PC-3 (cell line): ENCODE measurements at regions of chr5 and their contacts with region 1.

Region 1: GRCh38 chr5:81506900-81507588 is 113.1 kb upstream of the ACOT12 start:
- DNase-seq: peak; percentile 65
- ATAC-seq: peak; percentile 96
- H3K4me3 ChIP-seq: no peak overlapping the region
- H3K27ac ChIP-seq: no peak overlapping the region
- H3K4me1 ChIP-seq: no peaks in the 10 kb centered on the region
- H3K27me3 ChIP-seq: no peaks in the 10 kb centered on the region
- CTCF ChIP-seq: peak; percentile 78

Region 2: GRCh38 chr5:81301271-81302015 is 205.6 kb before region 1 on chr5 and contains the start of gene ZCCHC9:
- CTCF ChIA-PET with region 1: no interaction called
- POLR2A ChIA-PET with region 1: no interaction called
- intact Hi-C with region 1: loop called (anchors 5 kb)
- DNase-seq: peak; percentile 90
- ATAC-seq: peak; percentile 71
- H3K4me3 ChIP-seq: peak within 1 kb of the TSS; percentile 87
- H3K27ac ChIP-seq: peak within 1 kb of the TSS; percentile 95
- H3K4me1 ChIP-seq: peaks cover 39% of the 10 kb centered on the region
- H3K27me3 ChIP-seq: no peaks in the 10 kb centered on the region
- CTCF ChIP-seq: peak; percentile 11; the same call in 1 of the 2 replicates
- total RNA-seq, gene ZCCHC9: 19.4 and 22.7 TPM in 2 replicates

Region 3: DNA sequence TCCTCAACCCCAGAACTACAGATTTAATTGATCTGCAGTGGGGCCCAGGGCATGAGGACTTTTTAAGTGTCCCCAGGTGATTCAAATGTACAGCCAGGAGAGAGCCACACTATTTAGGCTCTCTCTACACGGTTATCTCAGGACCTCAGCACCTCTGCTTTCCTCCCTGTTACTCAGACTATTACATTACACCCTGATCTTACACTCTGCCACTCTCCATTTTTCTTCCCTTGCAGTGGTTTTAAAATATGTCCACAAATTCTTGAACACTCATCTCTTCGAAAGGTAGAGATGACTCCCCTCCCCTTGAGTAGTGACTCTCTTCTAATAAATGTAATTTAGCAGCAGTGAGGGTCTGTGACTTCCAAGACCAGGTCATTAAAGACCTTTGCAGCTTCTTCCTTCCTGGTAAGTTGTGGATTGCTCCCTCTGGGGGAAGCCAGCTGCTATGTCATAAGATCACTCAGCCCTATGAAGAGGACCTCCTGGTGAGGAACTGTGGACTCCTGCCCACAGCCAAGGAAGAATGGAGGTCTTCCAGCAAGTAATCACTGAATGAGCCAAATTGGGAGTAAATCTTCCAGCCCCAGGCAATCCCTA is 331.4 kb after region 1 on chr5:
- CTCF ChIA-PET with region 1: no interaction called
- POLR2A ChIA-PET with region 1: no interaction called
- intact Hi-C with region 1: loop called (anchors 5 kb)
- DNase-seq: peak; percentile 49
- ATAC-seq: peak; percentile 82
- H3K4me3 ChIP-seq: no peak overlapping the region
- H3K27ac ChIP-seq: no peak overlapping the region
- H3K4me1 ChIP-seq: peaks cover 11% of the 10 kb centered on the region
- H3K27me3 ChIP-seq: no peaks in the 10 kb centered on the region
- CTCF ChIP-seq: peak; percentile 68

Region 4: GRCh38 chr5:81971712-81972495 is 464.9 kb after region 1 on chr5 and contains the start of gene ATG10:
- CTCF ChIA-PET with region 1: no interaction called
- POLR2A ChIA-PET with region 1: no interaction called
- intact Hi-C with region 1: loop called (anchors 5 kb)
- DNase-seq: peak; percentile 88
- ATAC-seq: peak; percentile 96
- H3K4me3 ChIP-seq: peak within 1 kb of the TSS; percentile 78
- H3K27ac ChIP-seq: peak within 1 kb of the TSS; percentile 89
- H3K4me1 ChIP-seq: peaks cover 12% of the 10 kb centered on the region; the same call in 1 of the 2 replicates
- H3K27me3 ChIP-seq: no peaks in the 10 kb centered on the region
- CTCF ChIP-seq: no peak
- total RNA-seq, gene ATG10: 11.7 and 11.8 TPM in 2 replicates

Region 5: GRCh38 chr5:82165740-82166530 is 658.9 kb after region 1 on chr5:
- CTCF ChIA-PET with region 1: interaction called, 4 read pairs
- POLR2A ChIA-PET with region 1: no interaction called
- intact Hi-C with region 1: loop called (anchors 2 kb)
- DNase-seq: peak; percentile 73
- ATAC-seq: peak; percentile 78
- H3K4me3 ChIP-seq: no peak overlapping the region
- H3K27ac ChIP-seq: peak overlapping the region; percentile 68; the same call in 1 of the 2 replicates
- H3K4me1 ChIP-seq: peaks cover 28% of the 10 kb centered on the region
- H3K27me3 ChIP-seq: no peaks in the 10 kb centered on the region
- CTCF ChIP-seq: peak; percentile 88